Mammary epithelial cell (primary cell): ENCODE measurements at regions of chr5 and their contacts with region 1.

Region 1: GRCh38 chr5:149268928-149269557 is 2.6 kb upstream of the AFAP1L1 start:
- DNase-seq: peak; percentile 51
- H3K4me3 ChIP-seq: no peak overlapping the region
- H3K27ac ChIP-seq: no peak overlapping the region
- H3K4me1 ChIP-seq: peaks cover 16% of the 10 kb centered on the region
- H3K27me3 ChIP-seq: no peaks in the 10 kb centered on the region
- CTCF ChIP-seq: peak; percentile 57 to 70

Region 2: DNA sequence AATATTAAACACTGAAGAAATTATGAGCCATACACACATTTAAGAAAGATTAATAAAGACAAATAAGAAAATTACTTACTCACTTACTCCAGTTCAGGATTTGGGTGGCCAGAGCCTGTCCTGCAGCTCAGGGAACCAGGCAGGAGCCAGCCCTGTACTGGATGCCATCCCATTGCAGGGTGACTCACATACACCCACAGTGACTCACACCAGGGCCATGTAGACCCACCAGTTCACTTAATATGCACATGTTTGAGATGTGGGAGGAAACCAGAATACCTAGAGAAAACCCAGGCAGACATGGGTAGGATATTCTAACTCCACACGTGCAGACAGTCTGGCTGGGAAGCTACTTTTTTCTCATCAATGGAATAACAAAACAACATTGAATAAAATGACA is 492.3 kb before region 1 on chr5:
- CTCF ChIA-PET with region 1: no interaction called
- dilution Hi-C with region 1: loop called (anchors 10 kb)
- in situ Hi-C with region 1: no loop called
- intact Hi-C with region 1: no loop called
- DNase-seq: peak; percentile 95
- H3K4me3 ChIP-seq: no peak overlapping the region
- H3K27ac ChIP-seq: peak overlapping the region; percentile 67
- H3K4me1 ChIP-seq: peaks cover 22% of the 10 kb centered on the region
- H3K27me3 ChIP-seq: no peaks in the 10 kb centered on the region
- CTCF ChIP-seq: no peak

Region 3: DNA sequence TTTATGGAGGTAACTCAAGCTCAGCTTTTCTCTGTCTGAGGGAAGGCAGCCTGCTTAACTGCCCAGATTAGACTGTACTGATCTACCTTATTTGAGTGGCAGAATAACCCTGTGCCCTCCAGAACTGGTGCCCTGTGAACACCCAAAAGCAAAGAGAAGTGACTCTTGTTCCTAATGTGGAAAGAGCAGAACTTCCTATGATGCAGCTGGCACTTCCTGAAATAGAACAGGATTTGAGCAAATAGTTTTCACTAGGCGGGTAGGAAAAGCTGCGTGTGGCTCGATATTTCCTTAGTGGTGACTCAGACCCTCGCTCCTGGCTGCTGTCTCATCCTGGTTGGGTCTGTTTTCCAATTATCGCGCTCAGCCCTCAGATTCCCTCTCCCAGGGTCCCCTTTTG is 296.1 kb before region 1 on chr5:
- CTCF ChIA-PET with region 1: no interaction called
- dilution Hi-C with region 1: no loop called
- in situ Hi-C with region 1: no loop called
- intact Hi-C with region 1: no loop called
- DNase-seq: peak; percentile 54
- H3K4me3 ChIP-seq: no peak overlapping the region
- H3K27ac ChIP-seq: peak overlapping the region; percentile 23
- H3K4me1 ChIP-seq: peaks cover 46% of the 10 kb centered on the region
- H3K27me3 ChIP-seq: no peaks in the 10 kb centered on the region
- CTCF ChIP-seq: no peak

Region 4: GRCh38 chr5:149128023-149128875 is 140.8 kb before region 1 on chr5:
- CTCF ChIA-PET with region 1: no interaction called
- dilution Hi-C with region 1: no loop called
- in situ Hi-C with region 1: loop called in 1 of 2 experiments (anchors 10 kb)
- intact Hi-C with region 1: loop called (anchors 1 kb)
- DNase-seq: no peak
- H3K4me3 ChIP-seq: no peak overlapping the region
- H3K27ac ChIP-seq: no peak overlapping the region
- H3K4me1 ChIP-seq: peaks cover 58% of the 10 kb centered on the region
- H3K27me3 ChIP-seq: no peaks in the 10 kb centered on the region
- CTCF ChIP-seq: peak; percentile 70 to 76

Region 5: GRCh38 chr5:149228618-149229297 is 40.3 kb before region 1 on chr5:
- CTCF ChIA-PET with region 1: no interaction called
- dilution Hi-C with region 1: no loop called
- in situ Hi-C with region 1: no loop called
- intact Hi-C with region 1: loop called (anchors 1 kb)
- DNase-seq: peak; percentile 76
- H3K4me3 ChIP-seq: no peak overlapping the region
- H3K27ac ChIP-seq: no peak overlapping the region
- H3K4me1 ChIP-seq: peaks cover 21% of the 10 kb centered on the region
- H3K27me3 ChIP-seq: no peaks in the 10 kb centered on the region
- CTCF ChIP-seq: peak; percentile 73 to 85

Region 6: DNA sequence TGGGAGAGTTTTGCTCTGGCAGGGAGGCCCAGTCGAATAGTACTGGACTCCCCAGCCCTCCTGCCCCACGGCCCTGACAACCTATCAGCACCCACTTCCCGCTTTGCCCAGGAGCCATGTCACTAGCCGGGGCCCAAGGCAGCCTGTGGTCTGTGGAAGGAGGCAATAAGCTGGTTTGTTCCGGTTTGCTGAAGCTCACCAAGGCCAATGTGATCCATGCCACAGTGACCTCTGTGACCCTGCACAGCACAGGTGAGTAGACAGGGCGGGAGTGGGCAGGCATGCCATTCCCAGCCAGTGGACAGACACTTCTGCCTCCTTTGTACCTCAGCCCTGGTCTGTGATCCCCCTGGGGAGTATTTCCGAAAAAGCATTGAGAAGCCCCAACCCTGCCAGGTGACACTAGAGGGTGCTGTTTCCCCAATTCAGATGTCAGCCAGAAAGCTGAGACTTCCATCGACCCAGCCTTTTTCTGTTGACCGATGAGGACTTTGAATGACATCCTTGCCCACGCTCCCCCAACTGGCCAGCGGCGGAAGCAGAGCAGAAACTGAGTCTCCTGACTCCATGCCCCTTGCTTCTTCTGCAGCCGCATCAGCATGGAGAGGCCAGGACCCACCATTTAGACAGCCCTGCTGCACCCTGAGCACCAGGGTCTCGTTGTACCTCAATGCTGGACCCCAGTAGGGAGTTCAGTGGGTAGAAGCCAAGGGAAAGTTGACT is 98.4 kb after region 1 on chr5:
- CTCF ChIA-PET with region 1: interaction called, 3 read pairs
- dilution Hi-C with region 1: no loop called
- in situ Hi-C with region 1: no loop called
- intact Hi-C with region 1: loop called (anchors 2 kb)
- DNase-seq: peak; percentile 54
- H3K4me3 ChIP-seq: no peak overlapping the region
- H3K27ac ChIP-seq: no peak overlapping the region
- H3K4me1 ChIP-seq: no peaks in the 10 kb centered on the region
- H3K27me3 ChIP-seq: no peaks in the 10 kb centered on the region
- CTCF ChIP-seq: peak; percentile 77 to 85